CD8-positive, alpha-beta T cell (primary cell): ENCODE measurements at regions of chr3 and their contacts with region 1.

Region 1: GRCh38 chr3:52056968-52057805 is 816 bp upstream of the DUSP7 start:
- DNase-seq: peak; percentile 99 to 100 (median 99)
- ATAC-seq: peak; percentile 84
- H3K4me3 ChIP-seq: peak overlapping the region; percentile 68 to 77
- H3K4me3 Mint-ChIP-seq: peak overlapping the region; percentile 91
- H3K27ac ChIP-seq: peak overlapping the region; percentile 52 to 87
- H3K27ac Mint-ChIP-seq: peak overlapping the region; percentile 90
- H3K4me1 ChIP-seq: peaks cover 36% of the 10 kb centered on the region
- H3K4me1 Mint-ChIP-seq: peaks cover 35% of the 10 kb centered on the region
- H3K27me3 ChIP-seq: no peaks in the 10 kb centered on the region
- H3K27me3 Mint-ChIP-seq: no peaks in the 10 kb centered on the region
- CTCF ChIP-seq: no peak

Region 2: GRCh38 chr3:51941798-51942602 is 115.2 kb before region 1 on chr3 and contains the starts of genes PARP3 and RRP9:
- CTCF ChIA-PET with region 1: no interaction called
- POLR2A ChIA-PET with region 1: interaction called, 3 read pairs
- intact Hi-C with region 1: loop called (anchors 1 kb)
- DNase-seq: peak; percentile 98 to 100 (median 99)
- ATAC-seq: peak; percentile 93
- H3K4me3 ChIP-seq: peak within 1 kb of the TSS; percentile 78 to 80
- H3K4me3 Mint-ChIP-seq: peak within 1 kb of the TSS; percentile 94
- H3K27ac ChIP-seq: peak within 1 kb of the TSS; percentile 63 to 83
- H3K27ac Mint-ChIP-seq: peak within 1 kb of the TSS; percentile 90
- H3K4me1 ChIP-seq: peaks cover 31% of the 10 kb centered on the region
- H3K4me1 Mint-ChIP-seq: peaks cover 38% of the 10 kb centered on the region
- H3K27me3 ChIP-seq: no peaks in the 10 kb centered on the region
- H3K27me3 Mint-ChIP-seq: no peaks in the 10 kb centered on the region
- CTCF ChIP-seq: peak; percentile 92
- total RNA-seq, gene PARP3: 6.3 to 6.7 TPM
- total RNA-seq, gene RRP9: 8.1 to 8.3 TPM

Region 3: DNA sequence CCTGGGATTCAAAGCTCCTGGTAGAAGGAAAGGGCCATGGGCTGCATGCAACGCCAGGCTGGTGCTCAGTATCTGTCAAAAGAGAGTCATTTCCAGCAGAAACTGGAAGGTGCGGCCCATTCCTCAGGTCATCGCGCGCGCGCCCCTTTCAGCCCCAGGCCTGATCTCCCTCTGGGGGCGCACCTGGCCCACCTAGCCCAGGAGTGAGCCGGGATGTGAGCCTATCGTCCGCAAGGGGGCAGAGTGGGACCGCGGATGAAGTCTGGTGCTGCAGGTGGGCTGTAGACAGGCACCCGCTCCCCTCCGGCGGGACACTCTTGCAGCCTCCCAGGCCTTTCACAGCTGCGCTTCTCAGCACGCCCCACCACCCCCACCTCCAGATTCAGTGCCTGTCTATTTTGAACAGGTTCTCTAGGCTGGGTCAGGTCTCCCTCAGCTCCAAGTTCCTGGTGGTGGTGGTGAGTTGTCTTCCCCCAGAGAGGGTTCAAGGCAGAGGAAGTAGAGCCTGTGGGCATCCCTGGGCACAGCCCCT is 55.7 kb before region 1 on chr3:
- CTCF ChIA-PET with region 1: interaction called, 97 read pairs
- POLR2A ChIA-PET with region 1: interaction called, 7 read pairs
- intact Hi-C with region 1: loop called (anchors 1 kb)
- DNase-seq: peak; percentile 77 to 94 (median 89)
- ATAC-seq: peak; percentile 99
- H3K4me3 ChIP-seq: no peak overlapping the region
- H3K4me3 Mint-ChIP-seq: no peak overlapping the region
- H3K27ac ChIP-seq: no peak overlapping the region
- H3K27ac Mint-ChIP-seq: no peak overlapping the region
- H3K4me1 ChIP-seq: peaks cover 13% of the 10 kb centered on the region
- H3K4me1 Mint-ChIP-seq: peaks cover 14% of the 10 kb centered on the region
- H3K27me3 ChIP-seq: no peaks in the 10 kb centered on the region
- H3K27me3 Mint-ChIP-seq: no peaks in the 10 kb centered on the region
- CTCF ChIP-seq: peak; percentile 87

Region 4: DNA sequence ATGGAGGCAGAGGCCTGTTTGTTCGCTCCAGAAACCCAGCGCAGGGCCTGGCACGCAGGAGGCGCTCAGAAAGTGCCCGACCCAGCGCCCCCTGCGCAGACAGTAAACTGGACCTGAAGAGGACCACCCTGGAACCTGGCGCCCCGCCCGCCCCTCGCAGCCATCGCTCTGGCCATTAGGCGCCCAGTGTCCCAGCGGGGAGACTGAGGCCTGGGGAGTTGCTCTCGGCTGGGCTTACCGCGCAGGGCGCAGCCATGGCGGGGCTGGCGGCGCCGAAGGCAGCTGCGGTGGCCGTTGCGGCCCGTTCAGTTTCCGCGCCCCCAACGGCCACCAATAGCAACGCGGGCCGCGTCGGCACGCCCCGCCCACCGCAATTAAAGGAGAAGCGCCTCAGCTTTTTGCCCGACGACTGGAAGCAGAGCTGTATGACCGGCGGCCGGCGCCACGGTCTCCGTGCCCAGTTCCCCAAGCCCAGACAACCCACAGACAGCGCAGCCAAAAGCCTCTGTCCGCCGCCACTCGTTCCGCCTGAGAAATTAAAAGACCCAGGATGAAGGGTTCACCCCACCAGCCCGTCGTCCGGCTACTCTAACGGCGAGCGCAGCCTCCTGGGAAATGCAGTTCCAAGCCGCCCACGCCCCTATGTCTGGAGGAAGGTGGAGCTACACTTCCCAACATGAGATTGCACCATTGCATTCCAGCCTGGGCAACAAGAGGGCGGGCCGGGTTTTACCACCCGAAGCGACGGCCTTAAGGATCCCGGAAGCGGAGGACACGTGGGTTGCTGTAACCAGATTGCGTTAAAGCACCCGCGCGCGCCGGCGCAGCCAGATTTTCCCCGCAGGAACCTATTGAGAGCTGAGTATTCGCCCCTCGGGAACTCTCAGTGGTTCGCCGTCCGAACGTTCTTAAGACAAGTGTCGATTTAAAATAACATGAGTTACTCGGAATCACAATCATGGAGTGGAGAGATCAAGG is 97.2 kb after region 1 on chr3 and contains the start of gene POC1A:
- CTCF ChIA-PET with region 1: interaction called, 3 read pairs
- POLR2A ChIA-PET with region 1: no interaction called
- intact Hi-C with region 1: loop called (anchors 1 kb)
- DNase-seq: peak; percentile 61 to 91 (median 83)
- ATAC-seq: peak; percentile 85
- H3K4me3 ChIP-seq: peak within 1 kb of the TSS; percentile 98 to 99
- H3K4me3 Mint-ChIP-seq: peak within 1 kb of the TSS; percentile 96
- H3K27ac ChIP-seq: peak within 1 kb of the TSS; percentile 71 to 91
- H3K27ac Mint-ChIP-seq: peak within 1 kb of the TSS; percentile 96
- H3K4me1 ChIP-seq: peaks cover 7% of the 10 kb centered on the region
- H3K4me1 Mint-ChIP-seq: peaks cover 10% of the 10 kb centered on the region
- H3K27me3 ChIP-seq: no peaks in the 10 kb centered on the region
- H3K27me3 Mint-ChIP-seq: no peaks in the 10 kb centered on the region
- CTCF ChIP-seq: no peak
- total RNA-seq, gene POC1A: 0.24 to 0.42 TPM

Region 5: GRCh38 chr3:52238761-52239701 is 181.8 kb after region 1 on chr3 and contains the start of gene TWF2:
- CTCF ChIA-PET with region 1: no interaction called
- POLR2A ChIA-PET with region 1: interaction called, 3 read pairs
- intact Hi-C with region 1: loop called in 1 of 2 experiments (anchors 10 kb)
- DNase-seq: peak; percentile 67 to 95 (median 88)
- ATAC-seq: peak; percentile 83
- H3K4me3 ChIP-seq: peak within 1 kb of the TSS; percentile 79 to 95
- H3K4me3 Mint-ChIP-seq: peak within 1 kb of the TSS; percentile 98
- H3K27ac ChIP-seq: peak within 1 kb of the TSS; percentile 85 to 95
- H3K27ac Mint-ChIP-seq: peak within 1 kb of the TSS; percentile 98
- H3K4me1 ChIP-seq: peaks cover 77% of the 10 kb centered on the region
- H3K4me1 Mint-ChIP-seq: peaks cover 76% of the 10 kb centered on the region
- H3K27me3 ChIP-seq: no peaks in the 10 kb centered on the region
- H3K27me3 Mint-ChIP-seq: no peaks in the 10 kb centered on the region
- CTCF ChIP-seq: peak; percentile 58
- total RNA-seq, gene TWF2: 31.1 to 31.2 TPM